A673 (cell line): ENCODE measurements at regions of chrX and their contacts with region 1.

Region 1: GRCh38 chrX:22666441-22666840 is 333.3 kb upstream of the DDX53 start:
- DNase-seq: peak; percentile 85
- H3K4me3 ChIP-seq: no peak overlapping the region
- H3K27ac ChIP-seq: no peak overlapping the region
- H3K4me1 ChIP-seq: peaks cover 7% of the 10 kb centered on the region
- H3K27me3 ChIP-seq: no peaks in the 10 kb centered on the region
- CTCF ChIP-seq: peak; percentile 62

Region 2: GRCh38 chrX:22748093-22748999 is 81.9 kb after region 1 on chrX:
- CTCF ChIA-PET with region 1: interaction called, 8 read pairs
- POLR2A ChIA-PET with region 1: no interaction called
- intact Hi-C with region 1: loop called (anchors 2 kb)
- DNase-seq: peak; percentile 61
- H3K4me3 ChIP-seq: no peak overlapping the region
- H3K27ac ChIP-seq: no peak overlapping the region
- H3K4me1 ChIP-seq: no peaks in the 10 kb centered on the region
- H3K27me3 ChIP-seq: no peaks in the 10 kb centered on the region
- CTCF ChIP-seq: peak; percentile 86

Region 3: DNA sequence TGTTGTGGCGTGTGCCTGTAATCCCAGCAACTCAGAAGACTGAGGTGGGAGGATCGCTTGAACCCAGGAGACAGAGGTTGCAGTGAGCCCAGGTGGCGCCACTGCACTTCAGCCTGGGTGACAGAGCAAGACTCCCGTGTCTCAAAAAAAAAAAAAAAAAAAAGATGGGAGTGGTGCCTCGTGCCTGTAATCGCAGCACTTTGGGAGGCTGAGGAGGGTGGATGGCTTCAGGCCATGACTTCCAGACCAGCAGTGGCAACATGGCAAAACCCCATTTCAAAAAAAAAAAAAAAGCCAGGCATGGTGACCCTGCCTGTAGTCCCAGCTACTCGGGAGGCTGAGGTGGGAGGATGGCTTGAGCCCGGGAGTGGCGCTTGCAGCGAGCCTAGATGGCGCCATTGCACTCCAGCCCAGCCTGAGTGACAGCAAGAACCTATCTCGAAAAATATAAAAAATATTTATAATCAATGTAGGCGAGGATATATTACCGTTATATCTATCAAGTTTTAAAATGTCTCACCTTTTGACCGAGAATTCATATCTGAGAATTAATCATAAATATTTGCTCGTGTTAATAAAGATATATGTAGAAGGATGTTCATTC is 1415.3 kb after region 1 on chrX:
- CTCF ChIA-PET with region 1: no interaction called
- POLR2A ChIA-PET with region 1: no interaction called
- intact Hi-C with region 1: no loop called
- DNase-seq: peak; percentile 72
- H3K4me3 ChIP-seq: peak overlapping the region; percentile 34
- H3K27ac ChIP-seq: no peak overlapping the region
- H3K4me1 ChIP-seq: no peaks in the 10 kb centered on the region
- H3K27me3 ChIP-seq: no peaks in the 10 kb centered on the region
- CTCF ChIP-seq: peak; percentile 78

Region 4: DNA sequence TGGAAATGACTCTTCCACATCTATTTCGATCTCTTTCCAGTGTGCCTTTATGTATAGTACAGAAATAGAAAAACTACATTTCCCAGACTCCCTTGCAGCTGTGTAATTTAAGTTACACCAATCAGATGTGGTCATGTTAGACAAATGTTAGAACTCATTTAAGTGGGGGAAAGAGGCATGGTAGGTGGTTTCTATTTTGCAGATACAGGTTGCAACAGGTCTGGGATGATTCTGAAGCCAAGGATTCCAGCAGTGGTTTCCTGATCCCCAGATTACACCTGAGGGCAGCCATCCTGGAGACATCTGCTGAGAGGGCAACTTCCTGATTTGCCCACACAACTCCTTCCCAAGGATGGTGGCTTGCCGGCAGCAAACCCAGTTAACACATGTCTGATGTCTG is 1760.0 kb after region 1 on chrX:
- CTCF ChIA-PET with region 1: no interaction called
- POLR2A ChIA-PET with region 1: no interaction called
- intact Hi-C with region 1: no loop called
- DNase-seq: peak; percentile 9
- H3K4me3 ChIP-seq: no peak overlapping the region
- H3K27ac ChIP-seq: no peak overlapping the region
- H3K4me1 ChIP-seq: no peaks in the 10 kb centered on the region
- H3K27me3 ChIP-seq: no peaks in the 10 kb centered on the region
- CTCF ChIP-seq: no peak